ENCODE measurements at regions of chr1 and their contacts with region 1.

Region 1: DNA sequence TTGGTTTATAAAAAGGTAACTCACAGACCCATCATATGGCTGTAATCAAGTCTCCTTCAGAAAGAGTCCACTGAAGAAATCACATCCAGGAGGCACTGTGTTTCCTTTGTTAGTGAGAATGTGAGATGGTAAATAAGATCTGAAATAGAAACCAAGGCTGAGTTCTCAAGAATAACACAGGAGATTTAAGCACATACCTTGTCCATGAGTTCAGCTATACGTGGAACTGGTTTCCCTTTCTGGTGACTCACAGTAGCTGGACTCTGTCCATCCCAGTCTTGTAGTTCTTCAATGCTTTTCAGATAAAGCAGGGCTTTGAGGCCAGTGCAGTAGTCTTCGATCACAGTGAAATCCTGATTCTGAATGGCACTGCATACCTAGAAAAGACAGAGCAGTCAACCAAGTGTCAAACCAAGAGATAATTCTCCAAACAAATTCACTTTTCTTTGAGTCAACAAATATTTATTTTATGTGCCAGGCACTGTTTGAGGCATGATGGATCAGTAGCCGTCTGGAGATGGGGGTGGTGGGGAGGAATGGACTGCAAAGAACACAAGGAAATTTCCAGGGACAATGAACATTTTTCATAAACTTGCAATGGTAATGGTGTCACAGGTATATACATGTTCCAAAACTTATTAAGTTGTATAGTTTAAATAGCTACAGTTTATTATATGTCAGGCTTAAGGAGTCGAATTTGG is 471.4 kb downstream of the PTBP2 start:
- DNase-seq: no peak
- H3K4me3 ChIP-seq: peak overlapping the region in 1 of 59 donors; percentile 2
- H3K27ac ChIP-seq: peak overlapping the region in 1 of 59 donors; percentile 28
- H3K27me3 ChIP-seq: no peaks in the 10 kb centered on the region
- CTCF ChIP-seq: no peak

Region 2: DNA sequence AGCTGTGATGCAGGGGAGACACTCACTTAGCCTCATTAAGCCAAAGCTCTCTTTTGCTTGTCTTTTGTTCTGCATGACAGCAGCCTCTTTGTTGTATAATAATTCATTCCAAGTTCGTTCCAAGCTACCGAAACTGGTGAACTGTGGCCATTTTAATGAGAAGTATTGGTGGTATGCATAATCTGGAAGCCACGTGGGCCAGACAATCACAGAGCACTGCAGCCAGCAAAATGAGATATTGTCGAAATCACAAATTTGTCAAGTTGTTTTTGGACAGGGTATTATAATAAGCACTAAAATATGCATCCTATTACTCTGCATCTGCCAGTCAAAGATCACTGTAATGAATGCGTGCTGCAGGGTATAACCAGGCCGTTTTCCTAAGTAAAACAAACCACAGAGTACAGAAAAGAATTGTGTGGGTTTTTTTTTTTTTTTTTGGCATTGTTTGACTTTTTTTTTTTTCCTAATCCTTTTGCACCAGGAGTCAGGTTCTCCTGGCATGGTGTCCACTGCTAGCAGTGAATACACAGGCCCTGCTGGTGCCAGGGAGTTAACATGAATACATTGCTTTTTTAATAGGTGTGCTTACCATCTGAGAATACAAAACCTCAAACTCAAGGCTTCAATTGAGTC is 47.6 kb before region 1 on chr1:
- intact Hi-C with region 1: loop called in 1 of 2 experiments (anchors 5 kb)
- DNase-seq: peak in 7 of 10 donors; percentile 30 to 69 (median 44)
- H3K4me3 ChIP-seq: peak overlapping the region in 23 of 59 donors; percentile 4 to 47 (median 16)
- H3K27ac ChIP-seq: peak overlapping the region in 58 of 59 donors; percentile 20 to 90 (median 76)
- H3K27me3 ChIP-seq: no peaks in the 10 kb centered on the region
- CTCF ChIP-seq: peak in 8 of 56 donors; percentile 4 to 24 (median 10)